Panc1 (cell line): ENCODE measurements at regions of chr1 and their contacts with region 1.

Region 1: DNA sequence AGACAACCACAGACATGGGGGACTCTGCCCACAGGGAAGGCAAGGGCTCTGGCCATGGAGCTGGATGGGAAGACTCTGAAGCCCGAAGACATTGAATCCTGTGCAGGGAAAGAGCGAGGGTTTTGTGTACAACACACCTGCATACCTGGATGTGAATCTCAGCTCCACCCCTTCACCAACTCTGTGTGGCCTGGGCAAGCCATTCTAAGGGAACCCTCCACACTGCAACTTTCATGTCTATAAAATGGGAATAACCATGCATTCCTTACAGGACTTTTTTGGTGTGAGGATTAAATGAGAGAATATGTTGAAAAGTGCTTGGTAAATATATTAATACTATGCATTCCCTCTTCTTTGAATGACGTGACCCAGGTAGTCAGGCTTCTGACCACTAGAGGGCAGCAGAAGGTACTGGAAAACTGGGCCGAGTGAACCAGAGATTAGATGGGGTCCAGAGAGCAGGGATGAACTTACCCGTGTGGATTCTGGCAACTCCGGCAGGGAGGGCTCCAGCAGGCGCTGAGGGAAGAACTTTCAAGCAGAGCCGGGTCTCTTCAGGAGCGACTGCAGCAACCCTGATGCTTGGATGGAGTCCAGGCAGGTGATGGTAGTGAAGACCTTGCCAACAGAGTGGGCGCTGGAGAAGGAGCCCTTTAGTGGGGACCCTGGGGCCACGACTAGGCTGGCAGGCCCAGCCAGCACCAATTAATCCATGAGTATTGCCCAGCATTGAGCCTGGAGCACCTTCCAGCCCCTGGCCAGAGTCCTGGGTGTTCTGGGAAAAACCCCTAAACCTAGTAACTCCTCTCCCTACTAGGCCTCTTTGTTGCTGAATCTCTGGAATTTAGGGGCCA is 834 bp upstream of the ELF3 start:
- DNase-seq: no peak
- ATAC-seq: peak; percentile 84
- H3K4me3 ChIP-seq: peak overlapping the region; percentile 13 to 72; a peak in 3 of 4 replicates
- H3K27ac ChIP-seq: peak overlapping the region; percentile 86
- H3K4me1 ChIP-seq: peaks cover 52% of the 10 kb centered on the region
- H3K27me3 ChIP-seq: no peaks in the 10 kb centered on the region
- CTCF ChIP-seq: peak; percentile 91

Region 2: GRCh38 chr1:202122639-202123335 is 113.2 kb after region 1 on chr1 and contains the start of gene GPR37L1:
- CTCF ChIA-PET with region 1: interaction called, 11 read pairs
- POLR2A ChIA-PET with region 1: interaction called, 3 read pairs
- in situ Hi-C with region 1: no loop called
- intact Hi-C with region 1: loop called (anchors 1 kb)
- DNase-seq: no peak
- ATAC-seq: peak; percentile 81
- H3K4me3 ChIP-seq: no peak within 1 kb of the TSS
- H3K27ac ChIP-seq: no peak within 1 kb of the TSS
- H3K4me1 ChIP-seq: peaks cover 12% of the 10 kb centered on the region
- H3K27me3 ChIP-seq: no peaks in the 10 kb centered on the region
- CTCF ChIP-seq: peak; percentile 83; the same call in 1 of the 2 replicates
- total RNA-seq, gene GPR37L1: 0.44 TPM